ENCODE measurements at regions of chr12 and their contacts with region 1.

Region 1: DNA sequence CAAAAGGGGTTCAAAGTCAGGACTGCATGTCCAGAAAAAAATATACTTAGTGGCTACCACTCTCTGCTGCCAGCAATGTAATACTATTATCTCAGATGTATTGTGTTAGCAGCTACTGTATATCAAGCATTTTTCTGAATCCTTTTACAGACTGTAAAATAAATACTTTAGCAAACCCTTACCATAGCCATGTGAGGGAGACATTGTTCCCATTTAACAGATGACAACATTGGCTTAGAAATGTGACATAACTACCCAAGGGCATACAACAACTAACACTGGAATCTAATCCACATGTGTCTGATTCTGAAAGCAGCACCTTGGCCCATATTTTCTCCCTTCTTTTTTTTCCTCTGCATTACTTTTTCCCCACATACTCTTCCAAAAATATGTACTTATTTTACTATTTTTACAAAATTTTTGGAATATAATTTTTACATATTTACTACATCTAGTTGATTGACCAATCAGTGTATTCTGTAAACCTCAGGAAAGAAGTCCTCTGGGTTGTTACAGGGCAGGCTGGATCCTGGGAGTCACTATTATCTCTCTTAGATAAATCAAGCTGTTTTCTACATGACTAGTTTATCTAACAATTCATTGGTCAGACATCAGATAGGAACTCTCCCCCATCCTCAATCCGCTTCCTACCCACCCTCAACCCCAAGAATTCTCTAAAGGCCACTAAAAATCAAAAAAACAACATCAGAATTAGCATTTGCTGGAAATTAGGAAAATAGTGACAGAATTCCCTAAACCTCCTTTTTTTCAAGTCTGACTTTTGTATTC is 154.1 kb downstream of the BTG1 start:
- DNase-seq: no peak
- ATAC-seq: no peak
- H3K4me3 ChIP-seq: no peak overlapping the region
- H3K27ac ChIP-seq: peak overlapping the region in 3 of 12 donors; percentile 0 to 39 (median 0)
- H3K4me1 ChIP-seq: peaks cover 0 to 37% (median 12%) of the 10 kb centered on the region in 12 donors
- H3K27me3 ChIP-seq: no peaks in the 10 kb centered on the region
- CTCF ChIP-seq: no peak
- POLR2A ChIP-seq: no peak

Region 2: GRCh38 chr12:91239481-91239880 is 752.1 kb before region 1 on chr12:
- intact Hi-C with region 1: no loop called
- DNase-seq: no peak
- ATAC-seq: peak; percentile 62 to 77 (median 69)
- H3K4me3 ChIP-seq: no peak overlapping the region
- H3K27ac ChIP-seq: peak overlapping the region in 11 of 12 donors; percentile 6 to 80 (median 51)
- H3K4me1 ChIP-seq: peaks cover 0 to 16% (median 0%) of the 10 kb centered on the region in 12 donors
- H3K27me3 ChIP-seq: no peaks in the 10 kb centered on the region
- CTCF ChIP-seq: no peak
- POLR2A ChIP-seq: no peak

Region 3: DNA sequence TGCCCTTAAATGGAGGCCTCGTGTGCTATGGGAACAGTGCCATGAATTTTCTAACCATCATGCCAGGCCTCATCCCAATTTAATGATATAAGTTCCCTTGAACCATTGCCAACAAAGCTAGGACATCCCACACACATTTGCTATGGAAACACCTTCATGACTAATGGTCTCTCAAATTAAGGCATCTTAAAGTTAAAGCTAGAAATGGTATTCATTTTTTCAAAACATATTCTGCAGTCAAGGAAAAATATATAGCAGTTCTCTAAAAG is 36.8 kb after region 1 on chr12:
- intact Hi-C with region 1: loop called in 2 of 10 experiments (anchors 5 to 10 kb)
- DNase-seq: no peak
- ATAC-seq: no peak
- H3K4me3 ChIP-seq: no peak overlapping the region
- H3K27ac ChIP-seq: peak overlapping the region in 2 of 12 donors; percentile 78 to 82
- H3K4me1 ChIP-seq: peaks cover 0 to 54% (median 16%) of the 10 kb centered on the region in 12 donors
- H3K27me3 ChIP-seq: no peaks in the 10 kb centered on the region
- CTCF ChIP-seq: no peak
- POLR2A ChIP-seq: no peak

Region 4: DNA sequence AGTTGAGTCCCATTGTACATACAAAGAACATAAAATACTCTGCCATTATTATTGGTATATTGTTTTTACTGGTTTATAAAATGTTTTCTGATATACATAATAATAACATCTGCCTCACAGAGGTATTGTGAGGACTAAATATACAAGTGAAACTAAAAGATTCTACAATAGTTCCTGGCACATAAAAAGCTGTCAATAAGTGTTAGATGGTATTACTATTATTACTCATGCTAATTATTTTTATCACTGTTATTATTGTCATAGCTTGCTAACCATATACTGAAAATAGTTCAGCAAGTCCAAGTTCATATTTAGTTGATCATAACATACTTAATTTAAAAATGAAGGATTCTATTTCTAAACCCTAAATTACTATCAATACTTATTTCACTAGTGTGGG is 119.7 kb after region 1 on chr12:
- intact Hi-C with region 1: loop called in 1 of 10 experiments (anchors 10 kb)
- DNase-seq: no peak
- ATAC-seq: no peak
- H3K4me3 ChIP-seq: no peak overlapping the region
- H3K27ac ChIP-seq: no peak overlapping the region
- H3K4me1 ChIP-seq: peaks cover 0 to 18% (median 0%) of the 10 kb centered on the region in 12 donors
- H3K27me3 ChIP-seq: no peaks in the 10 kb centered on the region
- CTCF ChIP-seq: no peak
- POLR2A ChIP-seq: no peak

Region 5: GRCh38 chr12:92312463-92312964 is 320.9 kb after region 1 on chr12:
- intact Hi-C with region 1: no loop called
- DNase-seq: no peak
- ATAC-seq: peak in 2 of 4 donors; percentile 61 to 76
- H3K4me3 ChIP-seq: no peak overlapping the region
- H3K27ac ChIP-seq: peak overlapping the region in 4 of 12 donors; percentile 2 to 33 (median 10)
- H3K4me1 ChIP-seq: peaks cover 0 to 6% (median 0%) of the 10 kb centered on the region in 12 donors
- H3K27me3 ChIP-seq: no peaks in the 10 kb centered on the region
- CTCF ChIP-seq: no peak
- POLR2A ChIP-seq: no peak

Measured in heart left ventricle (tissue), 16 donors.